CD4-positive, alpha-beta T cell (primary cell): ENCODE measurements at regions of chr1 and their contacts with region 1.

Region 1: DNA sequence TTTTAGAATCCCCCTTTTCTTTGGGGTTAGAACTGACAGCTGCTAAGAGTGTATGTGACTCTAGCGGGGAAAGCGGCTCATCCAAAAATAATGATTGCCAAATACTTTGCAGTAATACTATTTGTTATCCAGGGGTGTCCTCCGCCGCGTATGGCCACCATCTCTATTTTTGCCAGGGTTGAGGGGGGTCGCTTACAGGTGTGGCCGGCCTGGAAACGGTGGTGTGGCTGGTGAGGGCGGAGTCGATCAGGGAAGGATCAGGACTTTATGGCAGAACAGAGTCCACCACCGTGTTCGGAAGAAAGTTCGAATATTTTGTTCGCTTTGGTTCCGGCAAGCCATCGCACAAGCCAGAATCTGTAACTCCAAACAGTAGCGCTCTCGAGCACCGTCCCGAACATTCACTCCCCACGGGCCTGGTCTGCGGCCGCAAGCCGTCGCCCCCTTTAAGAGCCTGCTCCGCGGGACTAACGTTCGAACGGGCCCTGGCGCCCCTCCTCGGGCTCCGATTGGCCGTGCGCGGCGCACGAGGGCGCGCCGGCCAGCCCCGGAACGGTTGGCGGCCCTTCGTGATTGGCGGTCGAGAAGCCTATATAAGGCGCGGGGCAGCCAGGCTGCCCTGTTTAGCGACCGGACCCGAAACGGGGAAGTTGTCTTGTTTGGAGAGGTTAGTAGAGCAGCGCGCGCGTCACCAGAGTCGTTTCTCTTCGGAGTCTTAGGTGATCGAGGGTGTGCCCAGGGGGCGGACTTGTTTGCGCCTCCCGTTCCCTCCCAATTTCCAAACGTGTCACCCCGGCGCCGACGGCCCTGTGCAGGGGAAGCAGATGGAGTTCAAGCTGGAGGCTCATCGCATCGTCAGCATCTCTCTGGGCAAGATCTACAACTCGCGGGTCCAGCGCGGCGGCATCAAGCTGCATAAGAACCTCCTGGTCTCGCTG is at the start of gene IER5:
- DNase-seq: peak; percentile 89 to 98 (median 94)
- ATAC-seq: peak; percentile 70
- H3K4me3 ChIP-seq: peak within 1 kb of the TSS; percentile 90
- H3K4me3 Mint-ChIP-seq: peak within 1 kb of the TSS; percentile 99
- H3K27ac ChIP-seq: peak within 1 kb of the TSS; percentile 95 to 97
- H3K27ac Mint-ChIP-seq: peak within 1 kb of the TSS; percentile 97
- H3K4me1 ChIP-seq: peaks cover 13% of the 10 kb centered on the region
- H3K4me1 Mint-ChIP-seq: peaks cover 53% of the 10 kb centered on the region
- H3K27me3 ChIP-seq: no peaks in the 10 kb centered on the region
- H3K27me3 Mint-ChIP-seq: no peaks in the 10 kb centered on the region
- CTCF ChIP-seq: no peak
- total RNA-seq, gene IER5: 53.8 to 54.1 TPM

Region 2: DNA sequence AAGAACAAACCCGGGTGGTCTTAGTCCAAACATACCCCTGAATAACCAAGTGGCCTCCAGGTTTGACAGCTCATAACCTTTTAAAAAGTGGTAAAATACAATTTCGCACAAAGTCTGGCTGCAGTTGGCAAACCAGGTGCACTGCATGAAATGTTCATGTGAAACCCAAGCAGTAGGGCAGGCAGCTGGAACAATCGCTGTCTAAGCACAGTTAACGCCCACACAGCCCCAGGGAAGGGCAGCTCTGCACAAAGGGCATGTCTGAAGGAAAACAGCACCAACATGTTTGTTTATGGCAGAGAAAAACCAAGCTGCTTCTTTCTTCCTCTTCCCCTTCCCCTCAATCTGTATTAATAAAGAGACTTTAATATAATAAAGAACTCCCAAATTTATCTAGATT is 126.2 kb before region 1 on chr1:
- CTCF ChIA-PET with region 1: no interaction called
- POLR2A ChIA-PET with region 1: no interaction called
- intact Hi-C with region 1: no loop called
- DNase-seq: no peak
- ATAC-seq: no peak
- H3K4me3 ChIP-seq: no peak overlapping the region
- H3K4me3 Mint-ChIP-seq: no peak overlapping the region
- H3K27ac ChIP-seq: no peak overlapping the region
- H3K27ac Mint-ChIP-seq: no peak overlapping the region
- H3K4me1 ChIP-seq: no peaks in the 10 kb centered on the region
- H3K4me1 Mint-ChIP-seq: peaks cover 4% of the 10 kb centered on the region
- H3K27me3 ChIP-seq: no peaks in the 10 kb centered on the region
- H3K27me3 Mint-ChIP-seq: no peaks in the 10 kb centered on the region
- CTCF ChIP-seq: no peak

Region 3: GRCh38 chr1:181021811-181022434 is 66.4 kb before region 1 on chr1:
- CTCF ChIA-PET with region 1: interaction called, 3 read pairs
- POLR2A ChIA-PET with region 1: interaction called, 14 read pairs
- intact Hi-C with region 1: loop called in 1 of 2 experiments (anchors 5 kb)
- DNase-seq: peak in 13 of 14 experiments; percentile 22 to 80 (median 44)
- ATAC-seq: peak; percentile 40
- H3K4me3 ChIP-seq: peak overlapping the region; percentile 76
- H3K4me3 Mint-ChIP-seq: peak overlapping the region; percentile 99
- H3K27ac ChIP-seq: peak overlapping the region; percentile 53 to 83
- H3K27ac Mint-ChIP-seq: peak overlapping the region; percentile 98
- H3K4me1 ChIP-seq: peaks cover 26% of the 10 kb centered on the region
- H3K4me1 Mint-ChIP-seq: peaks cover 47% of the 10 kb centered on the region
- H3K27me3 ChIP-seq: no peaks in the 10 kb centered on the region
- H3K27me3 Mint-ChIP-seq: peaks cover 12% of the 10 kb centered on the region
- CTCF ChIP-seq: no peak

Region 4: DNA sequence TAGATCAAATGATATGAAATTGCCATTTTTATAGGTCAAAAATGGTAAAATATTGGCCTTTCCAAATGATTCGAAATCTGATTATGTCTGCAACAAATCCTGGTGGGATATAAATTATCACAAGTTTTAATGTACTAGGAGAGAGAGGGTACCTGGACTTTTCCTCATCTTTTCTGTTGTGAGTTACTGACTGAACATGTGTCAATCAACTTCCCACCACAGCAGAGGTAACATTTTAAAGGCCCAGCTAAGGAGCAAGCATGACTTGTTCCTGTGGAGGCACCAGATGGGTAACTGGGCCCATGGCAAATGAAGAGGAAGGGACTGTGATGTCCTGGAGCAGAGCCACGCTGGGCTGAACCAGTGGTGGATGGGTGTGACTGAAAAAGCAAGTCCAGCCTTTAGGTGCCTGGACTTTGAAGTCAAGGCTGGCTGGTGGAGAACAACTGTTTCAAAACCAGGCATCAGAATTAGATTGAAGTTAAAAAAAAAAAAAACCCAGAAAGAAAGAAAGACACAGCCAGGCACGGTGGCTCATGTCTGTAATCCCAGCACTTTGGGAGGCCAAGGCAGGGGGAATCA is 48.0 kb before region 1 on chr1:
- CTCF ChIA-PET with region 1: interaction called, 6 read pairs
- POLR2A ChIA-PET with region 1: interaction called, 33 read pairs
- intact Hi-C with region 1: loop called (anchors 1 to 2 kb)
- DNase-seq: no peak
- ATAC-seq: no peak
- H3K4me3 ChIP-seq: no peak overlapping the region
- H3K4me3 Mint-ChIP-seq: no peak overlapping the region
- H3K27ac ChIP-seq: no peak overlapping the region
- H3K27ac Mint-ChIP-seq: no peak overlapping the region
- H3K4me1 ChIP-seq: peaks cover 59% of the 10 kb centered on the region
- H3K4me1 Mint-ChIP-seq: peaks cover 79% of the 10 kb centered on the region
- H3K27me3 ChIP-seq: no peaks in the 10 kb centered on the region
- H3K27me3 Mint-ChIP-seq: no peaks in the 10 kb centered on the region
- CTCF ChIP-seq: no peak

Region 5: GRCh38 chr1:181105134-181106021 is 17.0 kb after region 1 on chr1:
- CTCF ChIA-PET with region 1: interaction called, 31 read pairs
- POLR2A ChIA-PET with region 1: interaction called, 231 read pairs
- intact Hi-C with region 1: loop called (anchors 1 kb)
- DNase-seq: peak; percentile 86 to 97 (median 94)
- ATAC-seq: peak; percentile 88
- H3K4me3 ChIP-seq: peak overlapping the region; percentile 80
- H3K4me3 Mint-ChIP-seq: peak overlapping the region; percentile 88
- H3K27ac ChIP-seq: peak overlapping the region; percentile 58 to 72
- H3K27ac Mint-ChIP-seq: peak overlapping the region; percentile 67
- H3K4me1 ChIP-seq: peaks cover 49% of the 10 kb centered on the region
- H3K4me1 Mint-ChIP-seq: peaks cover 60% of the 10 kb centered on the region
- H3K27me3 ChIP-seq: no peaks in the 10 kb centered on the region
- H3K27me3 Mint-ChIP-seq: no peaks in the 10 kb centered on the region
- CTCF ChIP-seq: peak; percentile 1

Region 6: DNA sequence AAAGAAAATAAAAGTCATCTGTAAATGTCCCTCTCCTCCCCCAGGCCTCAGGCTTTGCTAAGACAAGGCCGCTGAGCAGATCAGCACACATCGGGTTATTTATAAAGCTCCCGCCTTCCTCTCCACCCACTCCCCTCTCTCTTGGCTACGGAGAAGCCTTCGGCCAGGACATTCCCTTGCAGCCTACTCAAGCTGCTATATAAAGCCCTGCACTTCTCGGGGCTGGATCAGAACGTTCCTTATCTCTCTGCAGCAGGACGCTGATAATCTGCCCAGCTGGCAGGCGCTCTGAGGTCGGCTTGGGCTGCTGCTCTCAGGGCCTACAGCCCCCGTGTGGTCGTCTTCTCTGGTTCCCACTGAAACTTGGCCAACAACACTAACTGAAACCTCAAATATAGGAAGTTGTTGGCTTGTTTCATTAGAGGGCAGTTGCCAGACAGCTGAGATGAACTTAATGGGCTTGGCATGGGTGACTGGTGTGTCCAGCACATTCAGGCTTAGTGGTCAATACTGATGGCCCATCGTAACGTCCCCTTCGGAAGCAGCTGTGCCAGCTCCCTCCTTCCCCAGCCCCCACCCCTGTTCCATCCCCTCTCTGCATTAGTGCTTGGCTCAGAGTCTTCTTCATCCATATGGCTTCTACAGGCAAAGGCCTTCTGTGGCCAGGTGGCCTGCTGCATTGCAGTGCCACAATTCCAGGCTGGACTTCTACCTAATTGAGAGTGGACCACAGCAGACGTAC is 64.7 kb after region 1 on chr1:
- CTCF ChIA-PET with region 1: interaction called, 15 read pairs
- POLR2A ChIA-PET with region 1: interaction called, 11 read pairs
- intact Hi-C with region 1: no loop called
- DNase-seq: peak in 2 of 14 experiments; percentile 35 to 44
- ATAC-seq: no peak
- H3K4me3 ChIP-seq: no peak overlapping the region
- H3K4me3 Mint-ChIP-seq: no peak overlapping the region
- H3K27ac ChIP-seq: no peak overlapping the region
- H3K27ac Mint-ChIP-seq: no peak overlapping the region
- H3K4me1 ChIP-seq: peaks cover 54% of the 10 kb centered on the region
- H3K4me1 Mint-ChIP-seq: peaks cover 63% of the 10 kb centered on the region
- H3K27me3 ChIP-seq: no peaks in the 10 kb centered on the region
- H3K27me3 Mint-ChIP-seq: no peaks in the 10 kb centered on the region
- CTCF ChIP-seq: no peak

Region 7: GRCh38 chr1:181166377-181167196 is 78.2 kb after region 1 on chr1:
- CTCF ChIA-PET with region 1: interaction called, 11 read pairs
- POLR2A ChIA-PET with region 1: interaction called, 19 read pairs
- intact Hi-C with region 1: loop called (anchors 1 kb)
- DNase-seq: peak; percentile 53 to 88 (median 65)
- ATAC-seq: peak; percentile 100
- H3K4me3 ChIP-seq: no peak overlapping the region
- H3K4me3 Mint-ChIP-seq: peak overlapping the region; percentile 75
- H3K27ac ChIP-seq: no peak overlapping the region
- H3K27ac Mint-ChIP-seq: peak overlapping the region; percentile 7
- H3K4me1 ChIP-seq: peaks cover 8% of the 10 kb centered on the region
- H3K4me1 Mint-ChIP-seq: peaks cover 7% of the 10 kb centered on the region
- H3K27me3 ChIP-seq: no peaks in the 10 kb centered on the region
- H3K27me3 Mint-ChIP-seq: no peaks in the 10 kb centered on the region
- CTCF ChIP-seq: peak; percentile 94